T-cell (primary cell): ENCODE measurements at regions of chr1 and their contacts with region 1.

Region 1: DNA sequence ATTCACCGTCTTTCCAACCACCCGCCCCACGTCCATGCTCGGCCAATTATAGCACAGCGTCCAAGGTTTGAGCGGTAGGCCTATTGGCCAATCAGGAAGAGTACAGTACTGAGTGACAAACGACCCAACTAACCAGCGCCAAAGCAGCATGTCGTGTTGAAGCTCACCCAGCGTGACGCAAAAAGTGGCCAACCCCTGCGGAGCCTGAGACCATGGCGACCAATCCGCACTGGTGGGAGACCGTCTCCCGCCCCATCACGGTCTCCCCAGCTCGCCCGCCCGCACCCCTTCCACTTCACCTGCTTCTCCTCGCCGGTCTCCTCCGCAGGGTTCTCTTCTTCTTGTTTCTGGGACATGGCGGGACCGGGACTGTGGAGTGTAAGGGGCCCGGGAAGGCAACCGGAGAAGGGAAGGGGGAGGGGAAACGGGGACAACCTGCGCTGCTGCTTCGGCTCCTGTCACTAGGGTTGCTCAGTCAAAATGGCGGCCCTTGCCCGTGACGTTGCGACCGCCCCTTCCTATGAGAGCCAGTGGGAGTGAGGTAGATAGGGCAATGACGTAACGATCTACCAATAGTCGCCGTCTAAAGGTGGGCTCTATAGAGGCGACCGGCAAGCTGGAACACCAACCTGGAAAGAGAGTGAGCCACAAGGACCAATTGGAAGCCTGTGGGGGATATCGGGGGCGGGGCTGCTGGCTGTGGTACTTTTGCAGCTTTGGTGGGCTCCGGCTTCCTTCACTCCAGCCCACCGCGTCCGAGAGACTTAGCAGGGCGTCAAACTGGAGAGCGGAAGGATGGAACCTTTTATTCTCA is at the start of gene ENSA:
- DNase-seq: peak; percentile 91 to 99 (median 97)
- ATAC-seq: peak; percentile 86 to 93 (median 91)
- H3K4me3 ChIP-seq: peak within 1 kb of the TSS; percentile 76 to 96
- H3K4me3 Mint-ChIP-seq: no peak within 1 kb of the TSS
- H3K27ac ChIP-seq: peak within 1 kb of the TSS; percentile 97
- H3K27ac Mint-ChIP-seq: peak within 1 kb of the TSS in 1 of 2 donors; percentile 65
- H3K4me1 ChIP-seq: peaks cover 12 to 18% of the 10 kb centered on the region in 2 experiments
- H3K4me1 Mint-ChIP-seq: peaks cover 0 to 19% (median 17%) of the 10 kb centered on the region in 3 donors
- H3K27me3 ChIP-seq: no peaks in the 10 kb centered on the region
- H3K27me3 Mint-ChIP-seq: no peaks in the 10 kb centered on the region
- total RNA-seq, gene ENSA: 108 to 158 (median 110) TPM

Region 2: GRCh38 chr1:149899460-149900293 is 729.6 kb before region 1 on chr1 and contains the start of gene BOLA1:
- CTCF ChIA-PET with region 1: no interaction called
- POLR2A ChIA-PET with region 1: interaction called in 1 of 2 experiments, 12 read pairs
- DNase-seq: peak; percentile 56 to 90 (median 77)
- ATAC-seq: peak; percentile 98 to 99 (median 98)
- H3K4me3 ChIP-seq: peak within 1 kb of the TSS; percentile 73 to 80
- H3K4me3 Mint-ChIP-seq: peak within 1 kb of the TSS; percentile 86 to 92 (median 91)
- H3K27ac ChIP-seq: peak within 1 kb of the TSS; percentile 74
- H3K27ac Mint-ChIP-seq: peak within 1 kb of the TSS; percentile 89 to 95
- H3K4me1 ChIP-seq: peaks cover 0 to 16% of the 10 kb centered on the region in 2 experiments
- H3K4me1 Mint-ChIP-seq: peaks cover 20 to 23% (median 21%) of the 10 kb centered on the region in 3 donors
- H3K27me3 ChIP-seq: no peaks in the 10 kb centered on the region
- H3K27me3 Mint-ChIP-seq: no peaks in the 10 kb centered on the region
- total RNA-seq, gene BOLA1: 6.0 to 27.6 (median 26.1) TPM

Region 3: GRCh38 chr1:150456146-150456647 is 173.1 kb before region 1 on chr1:
- CTCF ChIA-PET with region 1: interaction called in 1 of 2 experiments, 10 read pairs
- POLR2A ChIA-PET with region 1: no interaction called
- DNase-seq: no peak
- ATAC-seq: no peak
- H3K4me3 ChIP-seq: no peak overlapping the region
- H3K4me3 Mint-ChIP-seq: no peak overlapping the region
- H3K27ac ChIP-seq: no peak overlapping the region
- H3K27ac Mint-ChIP-seq: peak overlapping the region; percentile 23 to 72
- H3K4me1 ChIP-seq: no peaks in the 10 kb centered on the region
- H3K4me1 Mint-ChIP-seq: peaks cover 5 to 6% (median 5%) of the 10 kb centered on the region in 3 donors
- H3K27me3 ChIP-seq: no peaks in the 10 kb centered on the region
- H3K27me3 Mint-ChIP-seq: no peaks in the 10 kb centered on the region

Region 4: DNA sequence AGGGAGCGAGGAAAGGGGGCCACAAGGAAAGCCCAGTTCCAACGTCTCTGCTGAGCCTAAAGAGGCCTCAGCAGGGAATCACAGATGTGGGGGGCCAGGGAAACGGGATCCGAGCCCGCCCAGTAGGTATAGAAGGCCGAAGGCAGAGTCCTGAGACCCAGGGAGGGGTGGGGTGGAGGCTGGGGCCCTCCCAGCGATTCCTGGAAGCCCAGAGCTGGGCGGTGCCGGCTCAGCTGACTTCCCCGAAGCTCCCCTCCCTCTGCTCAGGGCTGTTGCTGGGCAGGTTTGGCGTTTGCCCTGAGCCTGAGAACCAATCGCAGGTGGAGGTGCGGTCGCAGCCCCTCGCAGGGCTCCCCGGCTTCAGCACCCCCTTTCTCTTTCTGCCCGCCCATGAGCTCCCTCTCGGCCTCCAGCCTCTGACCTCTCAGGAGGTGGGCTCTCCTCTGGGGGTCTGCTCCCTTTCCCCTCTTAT is 67.3 kb before region 1 on chr1:
- CTCF ChIA-PET with region 1: interaction called, 6 to 37 read pairs
- POLR2A ChIA-PET with region 1: interaction called, 5 to 22 read pairs
- DNase-seq: peak in 34 of 35 experiments; percentile 66 to 91 (median 83)
- ATAC-seq: peak; percentile 46 to 55 (median 52)
- H3K4me3 ChIP-seq: peak overlapping the region; percentile 83 to 90
- H3K4me3 Mint-ChIP-seq: peak overlapping the region; percentile 91 to 99 (median 95)
- H3K27ac ChIP-seq: peak overlapping the region; percentile 95
- H3K27ac Mint-ChIP-seq: peak overlapping the region; percentile 100
- H3K4me1 ChIP-seq: peaks cover 33 to 82% of the 10 kb centered on the region in 2 experiments
- H3K4me1 Mint-ChIP-seq: peaks cover 60 to 71% (median 61%) of the 10 kb centered on the region in 3 donors
- H3K27me3 ChIP-seq: no peaks in the 10 kb centered on the region
- H3K27me3 Mint-ChIP-seq: no peaks in the 10 kb centered on the region

Region 5: DNA sequence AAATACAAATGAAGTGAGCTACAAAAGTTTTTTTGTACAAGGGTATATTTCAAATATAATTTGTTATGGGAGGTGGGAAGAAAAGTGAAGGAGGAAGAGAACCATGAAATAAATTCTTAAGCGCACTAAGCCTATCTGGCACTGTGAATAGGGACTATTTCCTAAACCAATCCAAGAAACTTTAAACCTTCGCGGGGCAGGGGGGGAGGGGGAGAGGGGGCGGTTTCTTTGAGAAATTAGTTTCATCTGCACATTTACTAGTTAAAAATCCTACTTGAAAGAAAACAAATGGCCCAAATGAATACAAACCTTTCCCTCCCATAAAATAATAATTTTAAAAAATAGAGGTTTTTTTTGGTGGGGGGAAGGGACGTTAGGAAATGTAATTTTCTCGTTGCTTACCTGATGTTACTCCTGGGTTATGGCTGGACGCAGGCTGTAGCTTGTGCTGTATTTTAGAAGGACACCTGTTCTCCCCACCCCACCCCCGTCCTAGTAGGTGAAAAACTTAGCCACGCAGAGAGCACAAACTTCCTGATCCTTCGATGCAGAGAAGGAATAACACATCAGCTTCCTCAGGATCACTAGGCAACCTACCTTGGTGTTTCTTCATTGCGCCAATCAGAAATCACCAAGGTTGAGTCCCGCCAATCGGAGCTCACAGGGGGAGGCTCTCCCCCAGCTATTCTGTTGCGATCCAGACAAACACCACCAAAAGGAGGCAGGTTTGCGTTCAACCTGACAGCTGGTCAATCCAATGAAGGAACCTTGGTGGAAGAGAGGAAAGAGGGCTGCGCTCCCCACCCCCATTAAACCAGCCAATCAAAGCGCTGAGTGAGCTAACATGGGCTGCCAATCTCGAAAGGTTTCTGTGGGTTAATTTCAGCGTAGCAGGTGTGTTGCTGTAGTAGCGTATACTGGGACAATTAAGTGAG is 67.5 kb after region 1 on chr1 and contains the start of gene GOLPH3L:
- CTCF ChIA-PET with region 1: interaction called in 1 of 2 experiments, 8 read pairs
- POLR2A ChIA-PET with region 1: interaction called, 8 to 10 read pairs
- DNase-seq: peak; percentile 71 to 95 (median 90)
- ATAC-seq: peak; percentile 99 to 100 (median 100)
- H3K4me3 ChIP-seq: peak within 1 kb of the TSS; percentile 93 to 96
- H3K4me3 Mint-ChIP-seq: peak within 1 kb of the TSS; percentile 94 to 99 (median 97)
- H3K27ac ChIP-seq: peak within 1 kb of the TSS; percentile 77
- H3K27ac Mint-ChIP-seq: peak within 1 kb of the TSS; percentile 94 to 95
- H3K4me1 ChIP-seq: peaks cover 4 to 13% of the 10 kb centered on the region in 2 experiments
- H3K4me1 Mint-ChIP-seq: peaks cover 29 to 36% (median 31%) of the 10 kb centered on the region in 3 donors
- H3K27me3 ChIP-seq: no peaks in the 10 kb centered on the region
- H3K27me3 Mint-ChIP-seq: no peaks in the 10 kb centered on the region
- total RNA-seq, gene GOLPH3L: 10.2 to 23.7 (median 21.5) TPM

Region 6: DNA sequence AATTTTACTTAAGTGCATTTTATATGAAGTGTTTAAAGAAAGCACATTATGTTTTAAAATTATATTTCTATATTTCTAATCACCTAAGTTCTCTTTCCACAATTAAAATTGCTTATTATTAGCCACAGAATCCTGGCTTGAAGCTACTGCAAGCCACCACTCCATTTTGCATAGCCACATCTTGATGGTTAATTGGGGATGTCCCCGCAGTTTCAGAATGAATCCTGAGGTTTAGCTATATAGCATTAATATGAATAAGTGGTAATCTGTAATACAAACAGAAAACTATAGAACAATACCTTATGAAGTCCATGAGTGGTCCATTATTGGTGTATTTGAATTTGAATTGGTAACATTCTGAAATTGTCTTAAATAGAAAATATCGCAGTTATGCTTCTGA is 79.3 kb after region 1 on chr1:
- CTCF ChIA-PET with region 1: no interaction called
- POLR2A ChIA-PET with region 1: no interaction called
- DNase-seq: no peak
- ATAC-seq: no peak
- H3K4me3 ChIP-seq: no peak overlapping the region
- H3K4me3 Mint-ChIP-seq: no peak overlapping the region
- H3K27ac ChIP-seq: no peak overlapping the region
- H3K27ac Mint-ChIP-seq: no peak overlapping the region
- H3K4me1 ChIP-seq: no peaks in the 10 kb centered on the region
- H3K4me1 Mint-ChIP-seq: no peaks in the 10 kb centered on the region
- H3K27me3 ChIP-seq: no peaks in the 10 kb centered on the region
- H3K27me3 Mint-ChIP-seq: no peaks in the 10 kb centered on the region